Activated CD4-positive, alpha-beta T cell treated with anti-CD3 and anti-CD28 coated beads for 36 hours (primary cell): ENCODE measurements at regions of chr9 and their contacts with region 1.

Region 1: GRCh38 chr9:19161257-19162025 is 34.1 kb upstream of the PLIN2 start:
- DNase-seq: peak; percentile 78
- ATAC-seq: peak; percentile 98
- H3K4me3 Mint-ChIP-seq: peak overlapping the region; percentile 46
- H3K27ac Mint-ChIP-seq: peak overlapping the region; percentile 76
- H3K4me1 Mint-ChIP-seq: peaks cover 25% of the 10 kb centered on the region
- H3K27me3 Mint-ChIP-seq: no peaks in the 10 kb centered on the region

Region 2: GRCh38 chr9:19127881-19128500 is 33.5 kb before region 1 on chr9:
- CTCF ChIA-PET with region 1: interaction called, 4 read pairs
- POLR2A ChIA-PET with region 1: no interaction called
- intact Hi-C with region 1: loop called (anchors 1 to 2 kb)
- DNase-seq: peak; percentile 54
- ATAC-seq: peak; percentile 14
- H3K4me3 Mint-ChIP-seq: peak overlapping the region; percentile 92
- H3K27ac Mint-ChIP-seq: peak overlapping the region; percentile 88
- H3K4me1 Mint-ChIP-seq: peaks cover 58% of the 10 kb centered on the region
- H3K27me3 Mint-ChIP-seq: no peaks in the 10 kb centered on the region